CD4-positive, alpha-beta memory T cell (primary cell): ENCODE measurements at regions of chr1 and their contacts with region 1.

Region 1: DNA sequence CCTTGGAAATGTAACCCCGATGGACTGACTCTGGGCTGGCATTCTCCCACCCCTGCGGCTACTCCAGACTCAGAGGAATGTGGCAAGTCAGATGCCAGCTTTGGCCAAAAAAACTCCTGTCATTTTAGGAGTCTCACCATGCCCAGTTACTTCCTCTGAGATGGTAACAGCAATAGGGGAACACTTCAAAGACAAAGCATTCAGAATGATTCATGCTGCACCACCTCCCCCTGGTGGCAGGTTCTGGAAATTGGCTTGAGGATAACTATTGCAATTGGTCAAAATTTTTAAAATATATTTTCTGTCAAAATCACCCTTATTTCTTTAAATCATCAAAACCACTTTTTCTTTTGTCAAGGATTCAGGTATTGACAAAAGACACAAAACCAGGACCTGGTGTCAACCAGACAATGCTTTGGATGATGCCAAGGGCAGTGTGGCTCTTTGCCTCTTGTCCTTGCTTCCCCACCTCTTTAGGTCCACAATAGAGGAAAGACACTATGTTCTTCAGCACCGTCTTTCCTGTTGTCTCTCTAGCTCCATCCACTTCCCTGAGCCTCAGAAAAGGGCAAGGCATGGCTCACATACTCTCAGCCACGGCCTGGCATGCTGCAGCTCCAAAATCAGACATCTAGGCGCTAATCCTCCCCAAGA is 9.9 kb upstream of the CDCA8 start:
- DNase-seq: peak; percentile 67 to 77 (median 72)
- H3K4me3 ChIP-seq: no peak overlapping the region
- H3K4me3 Mint-ChIP-seq: no peak overlapping the region
- H3K27ac ChIP-seq: no peak overlapping the region
- H3K27ac Mint-ChIP-seq: peak overlapping the region; percentile 9 to 86 (median 77)
- H3K4me1 ChIP-seq: peaks cover 3% of the 10 kb centered on the region
- H3K4me1 Mint-ChIP-seq: peaks cover 3 to 15% (median 5%) of the 10 kb centered on the region in 4 donors
- H3K27me3 ChIP-seq: no peaks in the 10 kb centered on the region
- H3K27me3 Mint-ChIP-seq: no peaks in the 10 kb centered on the region

Region 2: GRCh38 chr1:36703526-36704208 is 978.8 kb before region 1 on chr1:
- CTCF ChIA-PET with region 1: no interaction called
- POLR2A ChIA-PET with region 1: no interaction called
- intact Hi-C with region 1: loop called (anchors 5 kb)
- DNase-seq: peak in 4 of 5 donors; percentile 18 to 36 (median 26)
- H3K4me3 ChIP-seq: no peak overlapping the region
- H3K4me3 Mint-ChIP-seq: peak overlapping the region in 2 of 8 donors; percentile 14 to 43
- H3K27ac ChIP-seq: no peak overlapping the region
- H3K27ac Mint-ChIP-seq: no peak overlapping the region
- H3K4me1 ChIP-seq: no peaks in the 10 kb centered on the region
- H3K4me1 Mint-ChIP-seq: peaks cover 2 to 10% (median 7%) of the 10 kb centered on the region in 4 donors
- H3K27me3 ChIP-seq: no peaks in the 10 kb centered on the region
- H3K27me3 Mint-ChIP-seq: peaks cover 19 to 23% of the 10 kb centered on the region in 2 donors

Region 3: DNA sequence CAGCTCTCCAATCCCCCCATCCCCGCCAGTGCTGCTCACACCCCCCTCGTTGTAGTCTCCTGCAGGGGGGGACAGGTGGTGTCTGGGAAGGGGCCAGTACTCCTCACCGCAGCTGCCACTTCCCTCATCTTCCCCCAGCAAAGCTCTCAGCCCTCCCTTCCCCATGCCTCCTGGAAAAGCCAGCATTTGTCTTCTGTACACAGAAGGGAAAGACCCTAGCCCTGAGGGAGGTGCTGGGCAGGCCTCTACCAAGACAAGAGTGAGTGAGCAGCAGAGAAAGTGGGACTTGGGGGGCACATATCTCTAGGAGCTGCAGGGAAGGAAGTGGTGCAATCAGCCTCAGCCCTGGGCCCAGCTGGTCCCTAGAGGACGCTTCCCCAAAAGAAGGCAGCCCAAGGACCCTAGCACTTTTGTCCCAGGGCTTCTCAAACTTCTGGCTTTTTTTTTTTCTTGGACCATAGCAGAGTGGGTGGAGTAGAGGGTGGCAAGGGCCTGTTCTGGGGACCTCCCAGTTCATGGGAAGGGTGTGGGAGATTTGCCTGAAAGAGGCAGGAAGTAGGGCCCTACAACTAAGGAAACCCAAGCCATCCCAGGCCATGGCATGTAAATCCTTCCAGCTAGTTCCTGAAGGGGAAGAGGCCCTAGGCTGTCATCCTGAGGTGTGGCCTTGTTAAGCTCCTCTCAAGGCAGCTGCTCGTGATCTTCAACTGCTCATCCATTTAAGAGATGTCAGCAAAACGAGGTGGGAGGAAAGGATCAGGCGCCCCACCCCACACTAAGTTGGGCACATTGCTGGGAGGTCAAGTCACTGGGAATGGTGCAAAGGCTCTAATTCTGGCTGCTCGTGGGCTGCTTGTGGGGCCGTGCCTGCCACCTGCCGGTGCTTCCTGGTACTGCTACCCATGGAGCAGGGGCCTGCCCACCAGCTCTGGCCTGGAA is 195.5 kb before region 1 on chr1:
- CTCF ChIA-PET with region 1: interaction called, 11 read pairs
- POLR2A ChIA-PET with region 1: no interaction called
- intact Hi-C with region 1: loop called (anchors 1 kb)
- DNase-seq: peak; percentile 69 to 80 (median 71)
- H3K4me3 ChIP-seq: no peak overlapping the region
- H3K4me3 Mint-ChIP-seq: no peak overlapping the region
- H3K27ac ChIP-seq: peak overlapping the region; percentile 42
- H3K27ac Mint-ChIP-seq: peak overlapping the region; percentile 78 to 100 (median 91)
- H3K4me1 ChIP-seq: peaks cover 17% of the 10 kb centered on the region
- H3K4me1 Mint-ChIP-seq: peaks cover 8 to 21% (median 14%) of the 10 kb centered on the region in 4 donors
- H3K27me3 ChIP-seq: no peaks in the 10 kb centered on the region
- H3K27me3 Mint-ChIP-seq: no peaks in the 10 kb centered on the region

Region 4: GRCh38 chr1:37553927-37554808 is 128.3 kb before region 1 on chr1 and contains the start of gene SNIP1:
- CTCF ChIA-PET with region 1: no interaction called
- POLR2A ChIA-PET with region 1: interaction called, 3 read pairs
- intact Hi-C with region 1: loop called (anchors 1 kb)
- DNase-seq: peak; percentile 90 to 96 (median 92)
- H3K4me3 ChIP-seq: peak within 1 kb of the TSS; percentile 96 to 99
- H3K4me3 Mint-ChIP-seq: peak within 1 kb of the TSS; percentile 95 to 100 (median 98)
- H3K27ac ChIP-seq: peak within 1 kb of the TSS; percentile 96
- H3K27ac Mint-ChIP-seq: peak within 1 kb of the TSS; percentile 81 to 100 (median 98)
- H3K4me1 ChIP-seq: peaks cover 30% of the 10 kb centered on the region
- H3K4me1 Mint-ChIP-seq: peaks cover 26 to 49% (median 36%) of the 10 kb centered on the region in 4 donors
- H3K27me3 ChIP-seq: no peaks in the 10 kb centered on the region
- H3K27me3 Mint-ChIP-seq: no peaks in the 10 kb centered on the region
- total RNA-seq, gene SNIP1: 29.8 to 30.2 TPM

Region 5: DNA sequence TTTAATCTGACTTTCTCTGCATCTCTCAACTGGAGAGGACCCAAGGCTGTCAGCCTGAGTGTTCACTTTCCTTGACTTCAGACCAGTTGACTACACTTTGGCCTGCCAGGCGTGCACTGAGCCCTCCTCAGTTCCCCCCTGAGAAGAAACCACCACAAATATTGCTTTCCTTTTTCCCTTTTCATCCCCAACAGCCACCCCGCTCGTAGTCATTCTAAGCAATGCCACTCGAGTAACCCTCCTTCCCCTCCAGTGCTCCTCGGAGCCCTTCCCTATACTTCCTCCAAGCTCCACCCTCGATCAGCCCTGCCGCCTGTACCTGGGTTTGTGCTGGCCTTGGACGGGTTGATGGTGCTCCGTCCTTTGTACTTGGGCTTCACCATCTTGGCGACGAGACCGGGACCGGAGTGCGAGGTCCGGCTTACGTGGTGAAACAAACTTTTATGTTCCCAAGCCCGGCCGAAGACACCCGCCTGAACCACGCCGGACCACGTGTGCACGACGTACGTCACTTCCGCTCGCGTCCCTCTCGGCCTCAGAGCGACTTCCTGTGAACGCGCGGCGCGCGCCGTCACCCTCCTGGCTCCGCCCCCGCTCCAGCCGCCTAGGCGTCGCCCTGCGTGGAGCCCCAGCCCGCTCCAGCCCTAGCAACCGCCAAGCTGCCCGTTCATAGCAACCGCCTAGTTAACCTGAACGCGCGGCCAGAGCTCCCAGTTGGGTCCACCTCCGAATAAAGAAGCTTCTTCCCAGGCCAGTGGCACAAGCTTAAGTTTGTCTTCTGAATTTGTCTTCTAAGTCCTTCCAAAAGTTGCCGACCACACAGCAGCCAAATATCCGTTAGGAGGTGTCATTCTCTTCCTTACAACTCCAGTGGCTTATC is 86.8 kb before region 1 on chr1 and contains the start of gene GNL2:
- CTCF ChIA-PET with region 1: interaction called, 228 read pairs
- POLR2A ChIA-PET with region 1: no interaction called
- intact Hi-C with region 1: loop called (anchors 2 kb)
- DNase-seq: peak; percentile 95
- H3K4me3 ChIP-seq: peak within 1 kb of the TSS; percentile 74 to 86
- H3K4me3 Mint-ChIP-seq: peak within 1 kb of the TSS; percentile 98 to 99 (median 99)
- H3K27ac ChIP-seq: peak within 1 kb of the TSS; percentile 89
- H3K27ac Mint-ChIP-seq: peak within 1 kb of the TSS; percentile 99 to 100 (median 99)
- H3K4me1 ChIP-seq: peaks cover 17% of the 10 kb centered on the region
- H3K4me1 Mint-ChIP-seq: peaks cover 18 to 36% (median 26%) of the 10 kb centered on the region in 4 donors
- H3K27me3 ChIP-seq: no peaks in the 10 kb centered on the region
- H3K27me3 Mint-ChIP-seq: no peaks in the 10 kb centered on the region
- total RNA-seq, gene GNL2: 33.9 to 37.1 TPM

Region 6: DNA sequence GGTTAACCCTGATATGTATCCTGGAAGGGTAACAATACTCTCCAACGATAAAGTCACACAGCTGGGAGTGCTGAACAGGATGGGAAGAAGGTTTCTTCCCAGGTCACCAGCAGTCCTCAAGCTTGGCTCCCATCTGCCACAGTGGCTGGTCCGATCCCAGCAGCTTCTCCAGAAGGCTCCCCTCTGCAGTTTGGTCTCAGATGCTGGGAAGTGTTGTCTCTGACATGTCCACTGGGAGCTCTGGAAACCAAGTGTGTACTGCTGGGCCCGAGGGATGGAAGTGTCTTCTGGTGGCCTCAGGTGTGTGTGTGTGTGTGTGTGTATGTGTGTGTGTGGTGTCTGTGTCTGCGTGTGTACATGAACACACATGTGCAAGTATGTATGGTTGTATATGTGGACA is 70.3 kb before region 1 on chr1:
- CTCF ChIA-PET with region 1: interaction called, 16 read pairs
- POLR2A ChIA-PET with region 1: no interaction called
- intact Hi-C with region 1: no loop called
- DNase-seq: no peak
- H3K4me3 ChIP-seq: no peak overlapping the region
- H3K4me3 Mint-ChIP-seq: no peak overlapping the region
- H3K27ac ChIP-seq: no peak overlapping the region
- H3K27ac Mint-ChIP-seq: no peak overlapping the region
- H3K4me1 ChIP-seq: no peaks in the 10 kb centered on the region
- H3K4me1 Mint-ChIP-seq: no peaks in the 10 kb centered on the region
- H3K27me3 ChIP-seq: peaks cover 6% of the 10 kb centered on the region
- H3K27me3 Mint-ChIP-seq: peaks cover 15 to 23% of the 10 kb centered on the region in 2 donors